Right ventricle myocardium inferior (tissue), 1 donor: ENCODE measurements at regions of chr12 and their contacts with region 1.

Region 1: DNA sequence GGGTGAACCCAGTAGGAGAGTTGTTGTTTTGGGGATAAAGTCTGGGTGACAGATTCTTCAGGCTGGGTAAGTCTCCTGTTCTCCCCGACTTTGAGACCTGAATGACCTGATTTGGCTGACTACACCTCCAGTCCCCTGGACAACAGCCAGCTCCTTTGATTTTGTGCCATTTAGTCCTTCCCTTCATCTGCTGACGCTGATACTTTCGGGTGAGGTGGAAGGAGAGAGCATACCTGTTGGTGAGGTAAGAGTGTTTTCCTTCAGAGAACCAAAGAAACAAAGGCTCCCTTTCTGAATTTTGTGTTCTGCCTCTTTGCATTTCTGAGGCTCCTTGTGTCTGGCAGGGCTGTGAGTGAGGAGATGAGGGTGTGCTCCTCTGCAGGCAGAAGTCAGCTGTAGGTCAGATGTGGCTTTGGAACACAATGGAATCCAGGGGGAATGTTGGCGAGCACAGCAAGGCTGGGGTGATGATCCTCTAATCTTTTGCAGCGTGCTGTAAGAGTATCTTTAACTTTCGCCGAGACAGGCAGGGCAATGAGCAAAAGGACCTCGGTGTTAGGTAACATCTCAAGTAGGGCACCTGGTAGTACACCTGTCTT is 12.1 kb downstream of the ETV6 start:
- DNase-seq: no peak
- ATAC-seq: peak; percentile 50

Region 2: DNA sequence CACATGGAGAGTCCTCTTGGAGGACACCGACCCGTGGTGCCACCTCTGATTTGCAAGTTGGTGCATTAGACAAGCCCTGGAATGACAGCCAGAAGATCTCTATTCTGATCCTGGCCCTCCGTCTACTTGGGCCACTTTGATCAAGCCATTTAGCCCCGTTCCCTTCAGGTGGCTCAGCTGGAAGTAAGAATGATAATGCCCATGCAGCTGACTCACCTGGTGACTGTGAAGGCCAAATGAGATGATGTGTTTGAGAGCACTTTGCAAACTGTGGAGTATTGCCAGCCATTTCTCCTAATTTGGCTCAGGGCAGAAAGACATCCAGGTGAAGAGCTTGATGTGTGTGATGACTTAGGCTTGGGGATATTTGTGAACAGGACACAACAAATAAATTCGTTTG is 153.8 kb after region 1 on chr12:
- intact Hi-C with region 1: loop called (anchors 5 kb)
- DNase-seq: no peak
- ATAC-seq: no peak